CD8-positive, alpha-beta T cell (primary cell): ENCODE measurements at regions of chr2 and their contacts with region 1.

Region 1: DNA sequence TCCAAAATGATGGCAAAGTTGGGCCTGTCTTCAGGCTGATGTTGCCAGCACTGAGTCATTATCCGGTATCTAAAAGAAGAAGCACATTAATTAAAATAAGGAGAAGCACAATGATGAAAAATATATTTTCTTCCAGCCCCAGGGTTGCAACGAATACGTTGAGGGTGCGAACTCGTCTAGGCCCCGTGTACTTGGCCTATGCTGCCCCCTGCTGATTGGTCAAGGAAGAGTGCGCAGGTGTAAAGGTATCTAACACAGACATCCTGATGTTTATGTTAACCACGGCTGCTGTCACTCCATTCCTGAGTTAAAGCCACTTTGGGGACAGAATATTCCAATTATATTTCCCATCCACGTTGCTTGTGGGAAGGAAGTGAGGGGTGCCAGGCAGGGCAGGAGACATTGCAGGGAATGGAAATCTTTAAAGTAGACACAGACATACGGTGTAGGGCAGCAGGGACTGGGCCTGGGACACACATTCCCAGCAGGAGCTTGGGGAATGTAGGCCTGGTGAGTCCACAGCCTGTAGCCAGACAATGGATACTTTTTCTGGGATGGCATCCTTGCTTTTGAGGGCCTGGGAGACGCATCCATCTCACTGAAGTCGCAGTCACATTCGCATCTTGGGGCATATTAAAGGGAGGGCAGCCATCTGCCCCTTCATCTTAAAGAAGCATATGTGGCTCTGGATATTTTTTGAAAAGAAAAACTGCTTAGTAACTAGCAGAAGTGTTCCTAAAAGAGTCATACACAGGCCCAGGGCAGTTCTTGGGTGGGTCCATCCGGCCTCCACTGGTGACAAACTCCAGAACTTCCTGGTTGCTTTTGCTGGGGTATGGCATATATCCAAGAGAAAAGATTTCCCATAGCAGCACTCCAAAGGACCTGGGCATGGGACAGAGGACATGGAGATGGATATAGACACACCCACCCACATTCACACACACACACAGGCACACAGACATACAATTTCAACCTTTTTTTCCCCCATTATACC is 81.9 kb downstream of the CLIP4 start:
- DNase-seq: peak; percentile 59 to 83 (median 79)
- ATAC-seq: peak; percentile 98
- H3K4me3 ChIP-seq: no peak overlapping the region
- H3K4me3 Mint-ChIP-seq: no peak overlapping the region
- H3K27ac ChIP-seq: no peak overlapping the region
- H3K27ac Mint-ChIP-seq: no peak overlapping the region
- H3K4me1 ChIP-seq: no peaks in the 10 kb centered on the region
- H3K4me1 Mint-ChIP-seq: peaks cover 7% of the 10 kb centered on the region
- H3K27me3 ChIP-seq: no peaks in the 10 kb centered on the region
- H3K27me3 Mint-ChIP-seq: no peaks in the 10 kb centered on the region
- CTCF ChIP-seq: peak; percentile 87

Region 2: GRCh38 chr2:29115797-29116781 is 81.0 kb before region 1 on chr2:
- CTCF ChIA-PET with region 1: interaction called, 3 read pairs
- POLR2A ChIA-PET with region 1: no interaction called
- intact Hi-C with region 1: loop called (anchors 5 to 10 kb)
- DNase-seq: peak; percentile 43 to 89 (median 73)
- ATAC-seq: peak; percentile 59
- H3K4me3 ChIP-seq: peak overlapping the region; percentile 80 to 82
- H3K4me3 Mint-ChIP-seq: peak overlapping the region; percentile 91
- H3K27ac ChIP-seq: peak overlapping the region; percentile 86 to 92
- H3K27ac Mint-ChIP-seq: peak overlapping the region; percentile 95
- H3K4me1 ChIP-seq: peaks cover 39% of the 10 kb centered on the region
- H3K4me1 Mint-ChIP-seq: peaks cover 54% of the 10 kb centered on the region
- H3K27me3 ChIP-seq: no peaks in the 10 kb centered on the region
- H3K27me3 Mint-ChIP-seq: no peaks in the 10 kb centered on the region
- CTCF ChIP-seq: no peak

Region 3: GRCh38 chr2:29164091-29164846 is 32.8 kb before region 1 on chr2:
- CTCF ChIA-PET with region 1: no interaction called
- POLR2A ChIA-PET with region 1: no interaction called
- intact Hi-C with region 1: loop called in 1 of 2 experiments (anchors 5 kb)
- DNase-seq: no peak
- ATAC-seq: no peak
- H3K4me3 ChIP-seq: no peak overlapping the region
- H3K4me3 Mint-ChIP-seq: no peak overlapping the region
- H3K27ac ChIP-seq: no peak overlapping the region
- H3K27ac Mint-ChIP-seq: no peak overlapping the region
- H3K4me1 ChIP-seq: no peaks in the 10 kb centered on the region
- H3K4me1 Mint-ChIP-seq: no peaks in the 10 kb centered on the region
- H3K27me3 ChIP-seq: no peaks in the 10 kb centered on the region
- H3K27me3 Mint-ChIP-seq: no peaks in the 10 kb centered on the region
- CTCF ChIP-seq: no peak